PC-3 (cell line): ENCODE measurements at regions of chr15 and their contacts with region 1.

Region 1: GRCh38 chr15:25947323-25948314 is 84.5 kb upstream of the ATP10A start:
- DNase-seq: peak; percentile 53
- ATAC-seq: peak; percentile 40; the same call in 1 of the 2 replicates
- H3K4me3 ChIP-seq: no peak overlapping the region
- H3K27ac ChIP-seq: no peak overlapping the region
- H3K4me1 ChIP-seq: peaks cover 3% of the 10 kb centered on the region; the same call in 1 of the 2 replicates
- H3K27me3 ChIP-seq: no peaks in the 10 kb centered on the region
- CTCF ChIP-seq: peak; percentile 45; the same call in 1 of the 2 replicates

Region 2: DNA sequence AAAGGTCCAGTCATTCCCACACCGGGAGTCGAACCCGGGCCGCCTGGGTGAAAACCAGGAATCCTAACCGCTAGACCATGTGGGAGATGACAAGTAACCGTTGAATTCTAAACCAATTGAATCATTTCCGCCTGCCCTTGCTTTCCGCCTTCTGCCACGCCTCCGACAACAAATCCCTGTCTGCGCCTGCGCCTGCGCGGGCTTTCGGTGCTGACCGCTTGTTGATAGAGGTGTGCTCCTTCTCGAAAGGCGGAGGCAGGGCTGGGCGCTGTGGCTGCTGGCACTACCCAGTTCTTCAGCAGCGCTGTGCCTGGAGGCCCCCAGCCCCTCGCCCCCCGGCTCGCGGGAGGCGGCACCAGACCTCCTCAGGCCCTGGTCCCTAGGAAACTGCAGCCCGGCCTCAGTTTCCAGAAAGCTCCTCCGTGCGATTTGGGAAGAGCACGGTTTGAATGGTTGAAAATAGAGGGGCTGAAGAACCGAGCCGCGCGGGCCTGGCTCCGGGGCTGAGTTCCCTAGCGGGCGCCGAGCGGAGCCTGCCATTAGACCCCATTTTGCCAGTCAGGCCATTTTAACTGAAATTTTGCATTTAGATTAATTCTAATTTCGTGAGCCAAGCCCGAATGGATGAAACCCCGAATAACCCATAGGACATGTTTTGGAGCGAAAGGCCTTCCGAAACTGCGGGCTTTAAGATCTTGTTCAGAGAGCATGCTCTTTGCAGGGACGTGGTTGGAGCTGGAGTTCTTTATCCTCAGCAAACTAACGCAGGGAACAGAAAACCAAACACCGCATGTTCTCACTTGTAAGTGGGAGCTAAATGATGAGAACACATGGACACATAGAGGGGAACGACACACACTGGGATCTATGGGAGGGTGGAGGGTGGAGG is 134.8 kb after region 1 on chr15:
- CTCF ChIA-PET with region 1: no interaction called
- POLR2A ChIA-PET with region 1: no interaction called
- intact Hi-C with region 1: loop called (anchors 10 kb)
- DNase-seq: peak; percentile 97
- ATAC-seq: peak; percentile 96
- H3K4me3 ChIP-seq: peak overlapping the region; percentile 71
- H3K27ac ChIP-seq: peak overlapping the region; percentile 16
- H3K4me1 ChIP-seq: peaks cover 15% of the 10 kb centered on the region
- H3K27me3 ChIP-seq: no peaks in the 10 kb centered on the region
- CTCF ChIP-seq: no peak

Region 3: DNA sequence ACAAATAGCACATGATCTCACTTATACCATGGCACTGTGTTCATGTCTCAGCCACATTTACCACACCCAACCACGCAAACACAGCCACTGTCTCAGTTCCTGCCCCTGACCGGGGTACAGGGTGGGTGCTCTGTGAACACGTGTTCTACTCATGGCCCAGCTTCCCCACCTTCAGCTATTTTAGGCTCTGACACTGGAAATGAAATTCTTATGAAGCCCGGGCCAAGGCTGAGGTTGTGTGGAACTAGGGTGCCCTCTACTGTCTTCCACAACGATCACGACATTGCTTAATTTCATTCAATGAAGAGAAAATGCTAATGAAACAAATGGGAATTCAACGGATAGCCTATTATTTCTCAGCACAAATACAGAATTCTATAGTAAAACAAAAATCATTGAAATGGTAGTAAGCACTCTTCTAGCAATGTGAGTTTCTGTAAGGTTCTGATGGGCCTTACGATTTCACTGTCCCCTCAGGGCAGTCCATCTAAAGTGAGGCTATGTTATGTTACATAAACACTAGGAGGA is 917.1 kb after region 1 on chr15:
- CTCF ChIA-PET with region 1: no interaction called
- POLR2A ChIA-PET with region 1: no interaction called
- intact Hi-C with region 1: loop called (anchors 1 kb)
- DNase-seq: peak; percentile 60
- ATAC-seq: peak; percentile 74
- H3K4me3 ChIP-seq: no peak overlapping the region
- H3K27ac ChIP-seq: no peak overlapping the region
- H3K4me1 ChIP-seq: no peaks in the 10 kb centered on the region
- H3K27me3 ChIP-seq: peaks cover 24% of the 10 kb centered on the region
- CTCF ChIP-seq: peak; percentile 84